Heart left ventricle (tissue), 16 donors: ENCODE measurements at regions of chr21 and their contacts with region 1.

Region 1: DNA sequence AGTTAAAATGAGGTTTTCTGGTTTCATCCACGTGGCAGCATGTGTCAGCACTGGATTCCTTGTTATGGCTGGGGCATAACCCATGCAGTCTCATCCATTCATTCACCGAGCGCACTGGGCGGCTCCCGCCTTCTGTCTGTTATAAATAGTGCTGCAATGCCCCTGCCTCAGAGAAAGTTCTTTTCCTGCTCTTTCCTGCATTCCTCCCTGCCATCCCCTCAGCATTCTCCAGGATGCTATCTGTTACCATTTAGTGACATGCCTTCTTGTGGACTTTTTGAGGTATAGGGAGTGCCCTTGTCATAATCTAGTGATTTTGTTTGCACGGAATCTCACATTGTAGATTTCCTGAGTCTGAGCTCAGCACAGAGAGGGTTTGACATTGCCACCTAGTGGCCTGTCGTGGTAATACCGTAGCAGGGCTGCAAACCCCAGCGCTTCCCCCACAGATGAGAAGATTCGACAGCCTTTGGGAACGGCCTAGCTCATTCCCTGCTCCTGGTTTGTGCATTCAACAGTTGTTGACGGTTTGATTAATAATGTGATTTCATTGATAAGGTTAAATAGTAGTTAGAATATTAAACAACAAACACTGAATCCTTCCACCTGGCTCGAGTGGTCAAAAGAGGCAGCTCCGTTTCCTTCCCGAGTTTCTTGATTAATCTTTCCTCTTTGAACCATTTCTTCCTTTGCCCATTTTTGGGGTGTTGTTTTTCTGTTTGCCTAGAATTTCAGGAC is 46.3 kb downstream of the UMODL1 start:
- DNase-seq: peak; percentile 68 to 79 (median 69)
- ATAC-seq: peak; percentile 68 to 87 (median 77)
- H3K4me3 ChIP-seq: peak overlapping the region in 1 of 12 donors; percentile 32
- H3K27ac ChIP-seq: no peak overlapping the region
- H3K4me1 ChIP-seq: peaks cover 0 to 18% (median 6%) of the 10 kb centered on the region in 12 donors
- H3K27me3 ChIP-seq: peaks cover 0 to 59% (median 22%) of the 10 kb centered on the region in 9 donors
- CTCF ChIP-seq: peak; percentile 89 to 96 (median 94)
- POLR2A ChIP-seq: no peak

Region 2: DNA sequence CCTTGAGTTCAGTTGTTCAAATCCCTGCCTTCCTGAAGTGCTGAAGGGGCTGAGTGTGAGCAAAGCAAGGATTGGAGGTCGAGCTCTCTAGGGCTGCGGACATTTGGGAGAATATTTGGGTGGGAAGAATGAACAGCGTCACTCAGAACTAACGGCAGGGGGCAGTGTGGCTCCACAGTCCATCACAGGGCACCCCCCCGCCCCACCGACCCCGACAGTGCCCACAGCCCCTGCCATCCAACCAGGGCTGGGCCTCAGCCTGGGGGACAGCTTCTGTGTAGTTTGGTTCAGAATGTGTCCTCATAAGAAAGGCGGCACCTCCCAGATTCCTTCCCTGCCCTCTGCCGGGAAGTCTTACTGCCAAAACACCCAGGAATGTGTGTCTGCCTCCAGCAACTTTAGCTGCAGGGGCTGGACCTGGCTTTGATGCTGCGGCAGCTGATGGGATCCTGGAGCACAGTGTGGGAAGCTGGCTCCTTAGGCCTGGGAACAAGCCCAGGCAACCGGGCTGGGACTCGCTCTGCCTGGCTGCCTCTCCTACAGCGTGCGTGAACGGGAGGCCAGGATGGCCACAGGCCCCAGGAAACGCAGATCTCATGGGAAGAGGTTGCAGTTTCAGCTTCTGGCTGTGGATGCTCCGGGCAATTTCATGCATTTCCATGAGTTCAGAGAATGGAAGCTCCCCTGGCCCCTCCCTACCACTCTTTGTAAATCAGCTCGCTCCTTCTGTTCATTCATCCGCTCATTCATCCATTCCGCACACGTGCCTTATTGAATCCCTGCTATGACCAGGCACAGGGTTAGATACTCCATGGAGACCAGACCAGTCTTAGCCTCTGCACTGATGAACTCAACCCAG is 504.5 kb before region 1 on chr21:
- intact Hi-C with region 1: loop called in 8 of 10 experiments (anchors 2 to 10 kb)
- DNase-seq: peak; percentile 65 to 80 (median 74)
- ATAC-seq: peak; percentile 80 to 91 (median 88)
- H3K4me3 ChIP-seq: no peak overlapping the region
- H3K27ac ChIP-seq: peak overlapping the region in 4 of 12 donors; percentile 27 to 66 (median 48)
- H3K4me1 ChIP-seq: peaks cover 0 to 26% (median 8%) of the 10 kb centered on the region in 12 donors
- H3K27me3 ChIP-seq: peaks cover 0 to 31% (median 9%) of the 10 kb centered on the region in 9 donors
- CTCF ChIP-seq: peak; percentile 57 to 82 (median 76)
- POLR2A ChIP-seq: no peak

Region 3: DNA sequence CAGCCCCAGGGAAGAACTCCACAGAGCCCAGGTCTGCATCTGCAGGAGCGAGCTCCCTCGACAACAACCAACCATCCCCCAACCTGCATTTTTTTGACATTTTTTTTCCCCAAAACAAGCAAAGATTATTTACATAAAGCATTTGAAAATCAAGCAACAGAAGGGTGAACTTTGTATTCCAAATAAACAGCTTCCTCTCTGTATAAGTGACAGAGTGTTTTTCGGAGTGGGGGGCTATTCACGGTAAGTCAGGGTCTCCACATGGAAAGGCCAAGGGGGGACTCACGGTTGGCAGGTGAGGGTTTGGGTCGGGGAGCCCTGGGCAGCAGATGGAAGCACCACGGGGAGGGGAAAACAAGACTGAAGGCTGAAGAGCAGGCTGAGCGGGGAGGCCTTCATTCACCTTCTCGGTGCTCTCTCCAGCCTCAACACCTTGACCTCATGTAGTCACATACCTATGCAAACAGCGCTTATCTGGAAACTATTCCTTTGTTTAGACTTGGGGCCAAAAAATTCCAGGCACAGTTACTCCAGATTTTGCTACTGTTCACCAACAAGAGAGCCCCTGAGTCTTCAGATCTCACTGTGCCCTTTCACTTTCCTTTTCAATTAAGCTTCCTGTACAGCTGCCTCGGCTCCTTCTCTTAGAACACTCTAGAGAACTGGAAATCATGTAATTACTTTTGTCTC is 191.1 kb before region 1 on chr21:
- intact Hi-C with region 1: loop called in 4 of 10 experiments (anchors 5 kb)
- DNase-seq: no peak
- ATAC-seq: peak; percentile 39 to 79 (median 44)
- H3K4me3 ChIP-seq: peak overlapping the region in 11 of 12 donors; percentile 10 to 62 (median 47)
- H3K27ac ChIP-seq: peak overlapping the region; percentile 60 to 92 (median 85)
- H3K4me1 ChIP-seq: peaks cover 0 to 75% (median 37%) of the 10 kb centered on the region in 12 donors
- H3K27me3 ChIP-seq: no peaks in the 10 kb centered on the region
- CTCF ChIP-seq: no peak
- POLR2A ChIP-seq: no peak

Region 4: GRCh38 chr21:41943851-41944250 is 173.5 kb before region 1 on chr21:
- intact Hi-C with region 1: no loop called
- DNase-seq: no peak
- ATAC-seq: no peak
- H3K4me3 ChIP-seq: no peak overlapping the region
- H3K27ac ChIP-seq: no peak overlapping the region
- H3K4me1 ChIP-seq: peaks cover 0 to 16% (median 12%) of the 10 kb centered on the region in 12 donors
- H3K27me3 ChIP-seq: no peaks in the 10 kb centered on the region
- CTCF ChIP-seq: no peak
- POLR2A ChIP-seq: no peak

Region 5: GRCh38 chr21:41953831-41954653 is 163.4 kb before region 1 on chr21 and contains the start of gene C2CD2:
- intact Hi-C with region 1: loop called in 3 of 10 experiments (anchors 10 kb)
- DNase-seq: peak; percentile 69 to 88 (median 80)
- ATAC-seq: peak; percentile 39 to 82 (median 74)
- H3K4me3 ChIP-seq: peak within 1 kb of the TSS; percentile 62 to 97 (median 81)
- H3K27ac ChIP-seq: peak within 1 kb of the TSS; percentile 32 to 82 (median 70)
- H3K4me1 ChIP-seq: peaks cover 11 to 51% (median 36%) of the 10 kb centered on the region in 12 donors
- H3K27me3 ChIP-seq: no peaks in the 10 kb centered on the region
- CTCF ChIP-seq: peak in 1 of 12 donors; percentile 3
- POLR2A ChIP-seq: peak in 1 of 2 donors; percentile 26
- total RNA-seq, gene C2CD2: 3.8 to 13.9 (median 7.8) TPM

Region 6: DNA sequence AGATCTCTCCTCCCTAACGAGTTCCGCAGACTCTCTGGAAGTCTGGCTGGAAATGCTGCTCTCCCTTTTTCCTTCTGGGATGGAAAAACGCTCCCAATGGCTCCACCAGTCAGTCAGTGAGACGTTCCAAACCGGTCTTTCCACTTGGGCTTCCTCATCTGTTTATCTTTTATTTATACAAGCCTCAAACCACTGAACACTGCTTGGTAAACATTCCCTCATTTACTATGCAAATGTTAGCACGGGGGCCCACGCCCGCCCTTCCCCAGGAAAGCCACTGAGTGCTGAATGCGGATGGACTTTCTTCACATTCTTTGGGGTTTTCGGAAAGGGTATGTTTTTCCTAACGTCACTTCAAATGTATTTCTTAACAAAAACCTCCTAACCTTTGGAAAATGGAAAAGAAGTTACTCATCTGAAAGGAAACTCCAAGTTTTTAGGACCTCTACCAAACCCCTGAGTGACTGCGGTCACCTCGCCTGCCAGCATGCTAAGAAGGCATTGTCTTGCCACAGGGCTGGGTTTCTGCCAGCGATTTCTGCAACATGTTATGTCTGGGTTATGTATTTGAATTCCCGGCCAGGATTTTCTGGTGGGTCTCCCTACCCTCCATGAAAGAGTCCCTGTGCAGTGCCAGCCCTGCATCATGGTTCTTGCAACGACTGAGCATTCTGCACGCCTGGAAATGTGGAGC is 60.3 kb before region 1 on chr21:
- intact Hi-C with region 1: no loop called
- DNase-seq: no peak
- ATAC-seq: peak in 2 of 4 donors; percentile 11 to 25
- H3K4me3 ChIP-seq: no peak overlapping the region
- H3K27ac ChIP-seq: peak overlapping the region in 1 of 12 donors; percentile 1
- H3K4me1 ChIP-seq: peaks cover 0 to 32% (median 2%) of the 10 kb centered on the region in 12 donors
- H3K27me3 ChIP-seq: no peaks in the 10 kb centered on the region
- CTCF ChIP-seq: no peak
- POLR2A ChIP-seq: no peak